CD8-positive, alpha-beta T cell (primary cell): ENCODE measurements at regions of chr20 and their contacts with region 1.

Region 1: DNA sequence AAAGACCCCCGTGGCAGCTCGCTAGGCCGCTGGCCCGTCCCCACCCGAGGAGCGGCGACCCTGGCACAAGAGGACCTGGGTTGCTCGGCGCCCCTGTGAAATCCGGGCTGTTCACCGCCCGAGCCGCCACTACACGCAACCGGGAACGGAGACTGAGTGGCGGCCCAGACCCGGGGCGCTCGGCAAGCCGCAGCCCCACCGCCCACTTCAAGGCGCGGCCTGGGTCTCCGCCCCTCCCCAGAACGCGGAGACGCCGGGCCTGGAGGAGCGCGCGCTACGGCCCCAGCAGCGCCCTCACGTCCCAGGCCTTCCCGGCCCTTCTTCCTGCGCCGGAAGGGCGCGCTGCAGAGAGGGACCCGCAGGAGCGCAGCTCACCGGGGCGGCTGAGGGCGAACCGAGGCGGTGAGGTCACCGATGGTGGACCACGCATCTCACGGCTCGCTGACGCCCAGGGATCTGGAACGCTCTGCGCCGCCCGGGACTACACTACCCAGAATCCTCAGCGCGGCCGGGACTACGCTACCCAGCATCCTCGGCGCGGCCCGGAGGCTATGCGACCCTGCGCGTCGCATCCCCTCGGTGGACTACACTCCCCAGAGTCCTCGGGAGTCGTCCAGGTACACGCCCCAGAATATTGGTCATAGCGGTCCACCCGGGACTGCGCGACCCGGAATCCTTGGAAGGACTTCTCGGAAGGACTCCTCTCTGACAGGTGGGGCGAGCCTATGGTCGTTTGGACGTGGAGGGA is at the start of gene ZNF337:
- DNase-seq: peak; percentile 85 to 95 (median 92)
- ATAC-seq: peak; percentile 98
- H3K4me3 ChIP-seq: peak within 1 kb of the TSS; percentile 62 to 78
- H3K4me3 Mint-ChIP-seq: peak within 1 kb of the TSS; percentile 95
- H3K27ac ChIP-seq: peak within 1 kb of the TSS; percentile 73 to 75
- H3K27ac Mint-ChIP-seq: peak within 1 kb of the TSS; percentile 93
- H3K4me1 ChIP-seq: peaks cover 8% of the 10 kb centered on the region
- H3K4me1 Mint-ChIP-seq: peaks cover 42% of the 10 kb centered on the region
- H3K27me3 ChIP-seq: no peaks in the 10 kb centered on the region
- H3K27me3 Mint-ChIP-seq: no peaks in the 10 kb centered on the region
- CTCF ChIP-seq: no peak
- total RNA-seq, gene ZNF337: 21.5 TPM

Region 2: DNA sequence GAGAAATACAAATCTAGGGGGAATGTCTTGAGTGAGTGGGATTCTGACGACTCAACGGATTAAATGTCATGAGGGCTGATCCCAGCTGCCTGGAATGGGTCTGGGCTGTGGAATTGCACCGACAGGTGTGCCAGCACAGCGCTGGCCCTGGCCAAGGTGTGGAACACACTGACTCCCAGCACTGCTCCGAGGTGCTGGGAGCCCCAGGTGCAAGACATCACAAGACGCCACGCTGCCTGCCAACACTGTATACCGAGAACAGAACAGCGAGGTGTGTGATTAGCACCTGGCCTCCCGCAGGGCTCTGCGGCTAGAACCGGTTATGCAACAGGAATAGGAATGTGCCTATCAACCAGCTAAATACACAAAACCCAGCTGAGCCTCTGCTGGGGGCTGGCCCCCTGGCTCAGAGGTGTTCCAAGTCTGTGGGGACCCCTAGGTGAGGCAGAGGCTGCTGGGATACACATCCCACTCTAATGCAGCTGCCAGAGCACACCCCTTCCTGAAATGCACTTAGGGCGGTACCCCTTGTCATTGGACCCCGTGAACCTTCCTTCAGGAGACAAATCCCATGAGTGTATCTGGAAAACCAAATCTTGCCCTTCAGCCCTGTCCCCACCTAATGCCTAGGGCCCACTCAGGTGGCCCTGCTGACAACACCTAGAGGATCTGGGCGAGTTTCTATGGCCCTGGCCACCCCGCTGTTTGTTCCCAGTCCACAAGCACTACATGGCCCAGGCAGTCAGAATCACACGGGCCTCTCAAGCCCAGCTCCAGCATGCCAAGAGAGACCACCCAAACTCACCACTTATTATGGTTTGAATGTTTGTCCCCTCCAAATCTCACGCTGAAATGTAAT is 679.1 kb before region 1 on chr20:
- CTCF ChIA-PET with region 1: no interaction called
- POLR2A ChIA-PET with region 1: no interaction called
- intact Hi-C with region 1: no loop called
- DNase-seq: no peak
- ATAC-seq: no peak
- H3K4me3 ChIP-seq: no peak overlapping the region
- H3K4me3 Mint-ChIP-seq: no peak overlapping the region
- H3K27ac ChIP-seq: no peak overlapping the region
- H3K27ac Mint-ChIP-seq: peak overlapping the region; percentile 22
- H3K4me1 ChIP-seq: no peaks in the 10 kb centered on the region
- H3K4me1 Mint-ChIP-seq: no peaks in the 10 kb centered on the region
- H3K27me3 ChIP-seq: no peaks in the 10 kb centered on the region
- H3K27me3 Mint-ChIP-seq: no peaks in the 10 kb centered on the region
- CTCF ChIP-seq: no peak

Region 3: DNA sequence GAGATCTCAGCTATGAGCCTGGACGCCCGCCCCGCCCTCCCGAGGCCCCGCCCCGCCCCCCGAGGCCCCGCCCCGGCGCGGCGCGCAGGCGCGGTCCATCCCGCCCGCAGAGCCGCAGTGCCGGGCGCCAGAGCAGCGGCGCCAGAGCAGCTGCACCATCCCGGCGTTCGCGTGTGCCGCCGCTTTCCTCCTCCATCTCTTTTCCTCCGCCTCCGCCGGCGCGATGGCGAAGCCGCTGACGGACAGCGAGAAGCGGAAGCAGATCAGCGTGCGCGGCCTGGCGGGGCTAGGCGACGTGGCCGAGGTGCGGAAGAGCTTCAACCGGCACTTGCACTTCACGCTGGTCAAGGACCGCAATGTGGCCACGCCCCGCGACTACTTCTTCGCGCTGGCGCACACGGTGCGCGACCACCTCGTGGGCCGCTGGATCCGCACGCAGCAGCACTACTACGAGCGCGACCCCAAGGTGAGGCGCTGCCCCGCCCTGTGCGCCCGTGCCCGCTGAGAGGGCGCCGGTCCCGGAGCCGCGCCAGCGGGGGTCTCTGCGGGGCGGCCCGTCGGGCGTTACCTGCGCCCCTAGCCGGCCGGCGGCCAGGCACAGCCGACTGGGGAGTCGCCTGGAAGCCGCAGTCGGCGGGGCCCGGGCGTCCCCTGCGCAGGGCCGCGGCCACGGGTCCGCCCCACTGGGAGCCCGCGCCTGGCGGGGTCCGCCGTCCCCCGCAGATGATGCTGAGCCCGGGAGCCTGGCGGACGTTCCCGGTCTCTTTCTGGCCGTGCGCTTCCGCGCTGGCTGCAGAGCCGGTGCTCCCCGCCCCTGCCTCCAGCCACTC is 448.4 kb before region 1 on chr20 and contains the start of gene PYGB:
- CTCF ChIA-PET with region 1: no interaction called
- POLR2A ChIA-PET with region 1: no interaction called
- intact Hi-C with region 1: loop called in 1 of 2 experiments (anchors 5 kb)
- DNase-seq: peak; percentile 65 to 87 (median 70)
- ATAC-seq: peak; percentile 88
- H3K4me3 ChIP-seq: peak within 1 kb of the TSS; percentile 97 to 99
- H3K4me3 Mint-ChIP-seq: peak within 1 kb of the TSS; percentile 93
- H3K27ac ChIP-seq: peak within 1 kb of the TSS; percentile 53 to 80
- H3K27ac Mint-ChIP-seq: peak within 1 kb of the TSS; percentile 91
- H3K4me1 ChIP-seq: peaks cover 29% of the 10 kb centered on the region
- H3K4me1 Mint-ChIP-seq: peaks cover 54% of the 10 kb centered on the region
- H3K27me3 ChIP-seq: no peaks in the 10 kb centered on the region
- H3K27me3 Mint-ChIP-seq: no peaks in the 10 kb centered on the region
- CTCF ChIP-seq: no peak
- total RNA-seq, gene PYGB: 35.2 to 39.2 TPM

Region 4: GRCh38 chr20:25407311-25408169 is 289.0 kb before region 1 on chr20 and contains the start of gene GINS1:
- CTCF ChIA-PET with region 1: no interaction called
- POLR2A ChIA-PET with region 1: no interaction called
- intact Hi-C with region 1: loop called in 1 of 2 experiments (anchors 5 kb)
- DNase-seq: peak; percentile 37 to 82 (median 66)
- ATAC-seq: peak; percentile 86
- H3K4me3 ChIP-seq: peak within 1 kb of the TSS; percentile 71 to 85
- H3K4me3 Mint-ChIP-seq: peak within 1 kb of the TSS; percentile 94
- H3K27ac ChIP-seq: peak within 1 kb of the TSS; percentile 30 to 40
- H3K27ac Mint-ChIP-seq: peak within 1 kb of the TSS; percentile 87
- H3K4me1 ChIP-seq: peaks cover 5% of the 10 kb centered on the region
- H3K4me1 Mint-ChIP-seq: peaks cover 10% of the 10 kb centered on the region
- H3K27me3 ChIP-seq: no peaks in the 10 kb centered on the region
- H3K27me3 Mint-ChIP-seq: no peaks in the 10 kb centered on the region
- CTCF ChIP-seq: no peak
- total RNA-seq, gene GINS1: 0.28 to 0.30 TPM

Region 5: DNA sequence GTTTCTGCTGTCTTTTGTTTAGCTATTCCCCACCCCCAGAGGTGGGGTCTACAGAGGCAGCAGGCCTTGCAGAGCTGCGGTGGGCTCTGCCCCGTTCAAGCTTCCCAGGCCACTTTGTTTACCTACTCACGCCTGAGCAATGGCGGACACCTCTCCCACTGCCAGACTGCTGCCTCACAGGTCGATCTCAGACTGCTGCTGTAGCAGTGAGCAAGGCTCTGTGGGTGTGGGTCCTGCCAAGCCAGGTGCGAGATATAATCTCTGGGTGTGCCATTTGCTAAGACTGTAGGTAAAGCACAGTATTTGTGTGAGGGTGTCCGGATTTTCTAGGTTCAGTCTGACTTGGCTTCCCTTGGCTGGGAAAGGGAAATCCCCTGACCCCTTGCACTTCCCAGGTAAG is 23.7 kb after region 1 on chr20:
- CTCF ChIA-PET with region 1: no interaction called
- POLR2A ChIA-PET with region 1: no interaction called
- intact Hi-C with region 1: loop called in 1 of 2 experiments (anchors 2 kb)
- DNase-seq: no peak
- ATAC-seq: no peak
- H3K4me3 ChIP-seq: no peak overlapping the region
- H3K4me3 Mint-ChIP-seq: no peak overlapping the region
- H3K27ac ChIP-seq: no peak overlapping the region
- H3K27ac Mint-ChIP-seq: no peak overlapping the region
- H3K4me1 ChIP-seq: peaks cover 15% of the 10 kb centered on the region
- H3K4me1 Mint-ChIP-seq: peaks cover 32% of the 10 kb centered on the region
- H3K27me3 ChIP-seq: no peaks in the 10 kb centered on the region
- H3K27me3 Mint-ChIP-seq: no peaks in the 10 kb centered on the region
- CTCF ChIP-seq: no peak

Region 6: GRCh38 chr20:25750765-25751696 is 54.5 kb after region 1 on chr20:
- CTCF ChIA-PET with region 1: no interaction called
- POLR2A ChIA-PET with region 1: no interaction called
- intact Hi-C with region 1: loop called in 1 of 2 experiments (anchors 1 kb)
- DNase-seq: peak; percentile 26 to 75 (median 55)
- ATAC-seq: peak; percentile 95
- H3K4me3 ChIP-seq: peak overlapping the region; percentile 45 to 73
- H3K4me3 Mint-ChIP-seq: peak overlapping the region; percentile 87
- H3K27ac ChIP-seq: peak overlapping the region in 1 of 2 experiments; percentile 41
- H3K27ac Mint-ChIP-seq: peak overlapping the region; percentile 85
- H3K4me1 ChIP-seq: peaks cover 16% of the 10 kb centered on the region
- H3K4me1 Mint-ChIP-seq: peaks cover 15% of the 10 kb centered on the region
- H3K27me3 ChIP-seq: no peaks in the 10 kb centered on the region
- H3K27me3 Mint-ChIP-seq: no peaks in the 10 kb centered on the region
- CTCF ChIP-seq: no peak